ENCODE measurements at regions of chr20 and their contacts with region 1.

Region 1: DNA sequence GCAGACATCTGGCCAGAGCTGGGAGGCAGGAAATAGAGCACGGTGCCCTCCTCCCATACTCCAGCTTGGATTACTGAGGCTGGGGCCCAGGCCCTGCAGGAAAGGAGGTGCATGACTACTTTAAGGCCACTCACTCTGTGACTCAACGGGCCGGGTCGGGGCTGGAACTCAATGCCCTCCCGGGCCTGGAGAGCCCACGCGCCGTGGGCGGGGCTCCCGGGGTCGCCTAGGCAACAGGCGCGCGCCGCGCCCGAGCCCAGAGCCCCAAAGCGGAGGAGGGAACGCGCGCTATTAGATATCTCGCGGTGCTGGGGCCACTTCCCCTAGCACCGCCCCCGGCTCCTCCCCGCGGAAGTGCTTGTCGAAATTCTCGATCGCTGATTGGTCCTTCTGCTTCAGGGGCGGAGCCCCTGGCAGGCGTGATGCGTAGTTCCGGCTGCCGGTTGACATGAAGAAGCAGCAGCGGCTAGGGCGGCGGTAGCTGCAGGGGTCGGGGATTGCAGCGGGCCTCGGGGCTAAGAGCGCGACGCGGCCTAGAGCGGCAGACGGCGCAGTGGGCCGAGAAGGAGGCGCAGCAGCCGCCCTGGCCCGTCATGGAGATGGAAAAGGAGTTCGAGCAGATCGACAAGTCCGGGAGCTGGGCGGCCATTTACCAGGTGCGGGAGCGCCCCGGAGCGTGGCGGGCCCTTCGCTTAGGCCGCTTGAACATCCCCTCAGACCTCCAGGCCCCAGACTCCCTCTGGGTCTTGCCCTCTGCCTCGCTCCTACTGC is at the start of gene PTPN1:
- DNase-seq: peak; percentile 99
- H3K4me3 Mint-ChIP-seq: peak within 1 kb of the TSS; percentile 91
- H3K27ac Mint-ChIP-seq: peak within 1 kb of the TSS; percentile 93
- H3K4me1 Mint-ChIP-seq: peaks cover 31% of the 10 kb centered on the region
- H3K27me3 Mint-ChIP-seq: no peaks in the 10 kb centered on the region
- CTCF ChIP-seq: no peak
- total RNA-seq, gene PTPN1: 56.4 and 63.0 TPM in 2 replicates

Region 2: GRCh38 chr20:50478162-50479036 is 31.7 kb before region 1 on chr20:
- CTCF ChIA-PET with region 1: interaction called, 30 read pairs
- POLR2A ChIA-PET with region 1: interaction called, 108 read pairs
- intact Hi-C with region 1: loop called (anchors 5 kb)
- DNase-seq: peak; percentile 79
- H3K4me3 Mint-ChIP-seq: no peak overlapping the region
- H3K27ac Mint-ChIP-seq: no peak overlapping the region
- H3K4me1 Mint-ChIP-seq: peaks cover 7% of the 10 kb centered on the region
- H3K27me3 Mint-ChIP-seq: no peaks in the 10 kb centered on the region
- CTCF ChIP-seq: peak; percentile 71

Region 3: GRCh38 chr20:50523552-50524167 is 13.5 kb after region 1 on chr20:
- CTCF ChIA-PET with region 1: interaction called, 7 read pairs
- POLR2A ChIA-PET with region 1: interaction called, 480 read pairs
- intact Hi-C with region 1: no loop called
- DNase-seq: no peak
- H3K4me3 Mint-ChIP-seq: no peak overlapping the region
- H3K27ac Mint-ChIP-seq: no peak overlapping the region
- H3K4me1 Mint-ChIP-seq: peaks cover 28% of the 10 kb centered on the region
- H3K27me3 Mint-ChIP-seq: no peaks in the 10 kb centered on the region
- CTCF ChIP-seq: no peak

Region 4: GRCh38 chr20:50555180-50555579 is 45.1 kb after region 1 on chr20:
- CTCF ChIA-PET with region 1: interaction called, 4 read pairs
- POLR2A ChIA-PET with region 1: interaction called, 146 read pairs
- intact Hi-C with region 1: no loop called
- DNase-seq: no peak
- H3K4me3 Mint-ChIP-seq: no peak overlapping the region
- H3K27ac Mint-ChIP-seq: no peak overlapping the region
- H3K4me1 Mint-ChIP-seq: peaks cover 26% of the 10 kb centered on the region
- H3K27me3 Mint-ChIP-seq: no peaks in the 10 kb centered on the region
- CTCF ChIP-seq: no peak

Region 5: DNA sequence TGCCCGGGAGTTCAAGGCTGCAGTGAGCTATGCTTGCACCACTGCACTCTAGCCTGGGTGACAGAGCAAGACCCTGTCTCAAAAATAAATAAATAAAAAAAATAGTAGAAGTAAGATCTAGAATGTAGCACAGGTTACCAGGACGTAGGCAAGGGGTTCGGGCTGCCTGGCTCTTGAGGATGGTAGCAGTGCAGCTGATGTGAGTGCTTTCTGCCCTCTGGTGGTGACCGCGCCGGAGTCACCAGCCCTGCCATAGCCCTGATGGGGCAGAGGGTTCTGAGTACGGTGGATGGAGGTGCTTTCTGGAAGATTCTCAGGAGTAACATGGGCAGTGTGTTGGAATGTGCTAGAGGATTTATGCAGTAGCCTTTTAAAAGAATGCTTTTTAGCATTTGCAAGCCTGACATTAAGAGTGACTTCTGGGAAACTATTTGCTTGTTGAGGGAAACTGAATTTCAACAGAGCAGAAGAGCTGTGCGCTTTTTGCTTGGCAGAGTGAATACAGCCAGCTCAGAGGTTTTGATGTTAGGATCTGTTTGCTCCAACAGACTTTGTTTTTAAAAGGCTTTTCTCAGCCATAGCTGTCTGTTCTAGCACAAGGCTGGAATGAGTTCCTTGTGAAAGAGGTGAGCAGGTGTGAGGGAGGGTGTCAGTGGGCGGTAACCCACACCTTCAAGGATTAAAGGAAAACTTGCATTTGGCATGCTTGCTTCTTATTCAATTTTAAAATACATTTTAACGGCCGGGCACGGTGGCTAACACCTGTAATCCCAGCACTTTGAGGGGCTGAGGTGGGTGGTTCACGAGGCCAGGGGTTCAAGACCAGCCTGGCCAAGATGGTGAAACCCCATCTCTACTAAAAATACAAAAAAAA is 66.0 kb after region 1 on chr20:
- CTCF ChIA-PET with region 1: interaction called, 35 read pairs
- POLR2A ChIA-PET with region 1: interaction called, 33 read pairs
- intact Hi-C with region 1: loop called (anchors 2 kb)
- DNase-seq: peak; percentile 63
- H3K4me3 Mint-ChIP-seq: no peak overlapping the region
- H3K27ac Mint-ChIP-seq: no peak overlapping the region
- H3K4me1 Mint-ChIP-seq: peaks cover 21% of the 10 kb centered on the region
- H3K27me3 Mint-ChIP-seq: no peaks in the 10 kb centered on the region
- CTCF ChIP-seq: peak; percentile 56

Region 6: GRCh38 chr20:50731055-50731871 is 221.1 kb after region 1 on chr20 and contains the start of gene PARD6B:
- CTCF ChIA-PET with region 1: no interaction called
- POLR2A ChIA-PET with region 1: interaction called, 19 read pairs
- intact Hi-C with region 1: no loop called
- DNase-seq: peak; percentile 99
- H3K4me3 Mint-ChIP-seq: peak within 1 kb of the TSS; percentile 77
- H3K27ac Mint-ChIP-seq: peak within 1 kb of the TSS; percentile 74
- H3K4me1 Mint-ChIP-seq: peaks cover 40% of the 10 kb centered on the region
- H3K27me3 Mint-ChIP-seq: no peaks in the 10 kb centered on the region
- CTCF ChIP-seq: no peak
- total RNA-seq, gene PARD6B: 5.3 and 5.8 TPM in 2 replicates

Measured in MCF 10A (cell line).